ENCODE measurements at regions of chr10 and their contacts with region 1.

Region 1: DNA sequence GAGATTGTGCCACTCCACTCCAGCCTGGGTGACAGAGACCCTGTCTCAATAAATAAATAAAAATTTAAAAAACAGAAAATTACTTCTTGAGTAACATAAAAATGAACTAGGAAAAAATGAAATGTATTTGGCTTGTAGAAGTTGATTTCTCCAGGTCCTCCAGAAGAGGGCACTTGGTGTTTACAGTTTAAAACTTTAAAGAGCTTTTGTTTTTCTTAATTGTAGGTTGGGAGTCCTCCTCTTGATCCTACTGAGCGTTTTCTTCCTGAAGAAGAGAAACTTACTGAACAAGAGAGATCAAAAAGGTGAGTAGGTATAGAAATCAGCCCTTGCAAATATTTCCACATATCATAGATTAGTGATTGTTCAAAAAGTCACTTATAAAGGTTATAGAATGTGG is 16.2 kb downstream of the KIFBP start:
- DNase-seq: peak in 3 of 35 experiments; percentile 16 to 68 (median 26)
- ATAC-seq: peak; percentile 59 to 73 (median 60)
- H3K4me3 ChIP-seq: no peak overlapping the region
- H3K4me3 Mint-ChIP-seq: no peak overlapping the region
- H3K27ac ChIP-seq: no peak overlapping the region
- H3K27ac Mint-ChIP-seq: no peak overlapping the region
- H3K4me1 ChIP-seq: no peaks in the 10 kb centered on the region
- H3K4me1 Mint-ChIP-seq: peaks cover 0 to 3% (median 2%) of the 10 kb centered on the region in 3 donors
- H3K27me3 ChIP-seq: no peaks in the 10 kb centered on the region
- H3K27me3 Mint-ChIP-seq: no peaks in the 10 kb centered on the region

Region 2: GRCh38 chr10:69092959-69093850 is 88.4 kb after region 1 on chr10:
- CTCF ChIA-PET with region 1: interaction called, 46 to 98 read pairs
- POLR2A ChIA-PET with region 1: interaction called, 4 to 11 read pairs
- DNase-seq: peak; percentile 49 to 94 (median 79)
- ATAC-seq: peak; percentile 38 to 73 (median 64)
- H3K4me3 ChIP-seq: no peak overlapping the region
- H3K4me3 Mint-ChIP-seq: peak overlapping the region; percentile 17 to 59 (median 46)
- H3K27ac ChIP-seq: peak overlapping the region; percentile 98
- H3K27ac Mint-ChIP-seq: peak overlapping the region; percentile 88
- H3K4me1 ChIP-seq: peaks cover 31 to 57% of the 10 kb centered on the region in 2 experiments
- H3K4me1 Mint-ChIP-seq: peaks cover 47 to 69% (median 64%) of the 10 kb centered on the region in 3 donors
- H3K27me3 ChIP-seq: no peaks in the 10 kb centered on the region
- H3K27me3 Mint-ChIP-seq: no peaks in the 10 kb centered on the region

Measured in T-cell (primary cell).